Endothelial cell of umbilical vein (primary cell): ENCODE measurements at regions of chr3 and their contacts with region 1.

Region 1: DNA sequence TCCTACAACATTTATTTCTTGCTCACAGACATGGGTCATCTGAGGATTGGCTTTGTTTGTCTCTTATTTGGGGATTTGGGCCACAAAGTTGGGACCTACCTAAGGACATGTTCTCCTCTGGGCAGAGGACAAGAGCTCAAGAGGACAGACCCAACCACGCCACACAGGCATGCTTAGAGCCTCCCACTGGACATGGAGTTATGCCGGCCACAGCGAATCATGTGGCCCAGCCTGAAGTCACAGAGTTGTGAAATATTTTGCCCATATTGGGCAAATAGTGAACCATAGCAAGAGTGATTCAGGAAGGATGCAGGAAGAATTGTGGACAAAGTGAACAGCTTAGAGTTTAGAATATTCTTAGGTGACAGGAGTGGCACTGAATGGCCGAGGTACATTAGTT is 9.9 kb downstream of the TRAK1 start:
- DNase-seq: peak; percentile 28
- H3K4me3 ChIP-seq: no peak overlapping the region
- H3K27ac ChIP-seq: no peak overlapping the region
- H3K4me1 ChIP-seq: peaks cover 39% of the 10 kb centered on the region
- H3K27me3 ChIP-seq: no peaks in the 10 kb centered on the region
- CTCF ChIP-seq: no peak
- POLR2A ChIP-seq: no peak

Region 2: DNA sequence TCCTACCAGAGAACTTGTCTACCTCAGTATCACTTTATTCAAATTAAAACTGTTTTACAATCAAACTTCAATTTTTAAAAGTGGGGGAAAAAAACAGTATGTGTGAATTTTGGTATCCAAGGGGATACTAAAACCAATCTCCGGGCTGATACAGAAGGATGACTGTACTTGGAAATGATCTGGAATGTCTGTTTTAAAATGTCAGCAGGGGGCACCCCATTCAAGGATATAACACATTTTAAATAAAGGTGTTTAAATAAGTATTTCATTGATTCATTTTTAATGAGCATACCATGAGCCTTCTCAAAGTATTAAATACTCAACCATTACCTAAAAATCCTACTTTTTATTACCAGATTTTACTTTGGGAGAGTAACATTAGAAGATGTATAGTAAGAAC is 207.1 kb before region 1 on chr3:
- CTCF ChIA-PET with region 1: interaction called, 105 read pairs
- POLR2A ChIA-PET with region 1: no interaction called
- dilution Hi-C with region 1: no loop called
- intact Hi-C with region 1: loop called (anchors 1 kb)
- DNase-seq: peak; percentile 75
- H3K4me3 ChIP-seq: no peak overlapping the region
- H3K27ac ChIP-seq: no peak overlapping the region
- H3K4me1 ChIP-seq: no peaks in the 10 kb centered on the region
- H3K27me3 ChIP-seq: no peaks in the 10 kb centered on the region
- CTCF ChIP-seq: peak; percentile 14 to 22
- POLR2A ChIP-seq: no peak

Region 3: DNA sequence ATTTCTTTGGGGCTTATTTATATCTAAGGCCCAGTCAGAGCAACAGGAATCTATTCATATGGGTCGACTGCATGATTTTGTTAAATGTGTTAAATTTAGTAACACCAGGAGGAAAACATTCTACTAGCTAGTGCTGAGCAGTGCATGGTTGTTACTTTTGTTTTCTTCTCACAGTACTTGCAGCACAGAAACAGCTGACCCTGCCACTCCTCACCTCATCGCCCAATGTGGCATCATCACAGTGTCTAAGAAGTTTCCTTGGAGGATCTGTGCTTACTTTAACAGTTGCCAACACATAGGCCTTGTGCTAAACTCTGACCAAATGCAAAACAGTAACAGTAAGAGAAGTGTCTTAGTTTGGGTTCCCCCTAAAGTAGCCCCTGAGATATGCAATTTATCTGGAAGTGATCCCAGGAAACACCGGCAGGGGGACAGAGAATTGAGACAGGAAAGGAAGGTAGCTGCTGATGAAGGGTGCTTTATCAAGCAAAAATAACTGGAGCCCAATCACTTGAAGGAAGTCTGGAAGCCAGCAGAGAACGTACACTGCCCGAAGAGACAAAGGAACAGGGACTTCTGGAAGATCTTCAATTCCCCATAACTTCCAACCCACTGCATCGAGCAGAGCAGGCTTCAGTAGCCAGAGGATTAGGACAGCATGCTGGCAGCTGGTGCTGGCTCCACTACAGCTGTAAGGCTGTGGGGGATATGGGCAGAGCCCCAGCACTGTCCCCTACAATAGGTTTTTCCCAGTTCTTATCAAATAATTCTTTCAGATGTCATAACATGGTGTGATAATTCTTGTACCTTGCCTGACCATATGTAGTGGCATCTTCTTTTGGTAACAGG is 103.1 kb before region 1 on chr3:
- CTCF ChIA-PET with region 1: interaction called, 38 read pairs
- POLR2A ChIA-PET with region 1: no interaction called
- dilution Hi-C with region 1: no loop called
- intact Hi-C with region 1: loop called (anchors 1 kb)
- DNase-seq: no peak
- H3K4me3 ChIP-seq: no peak overlapping the region
- H3K27ac ChIP-seq: no peak overlapping the region
- H3K4me1 ChIP-seq: no peaks in the 10 kb centered on the region
- H3K27me3 ChIP-seq: no peaks in the 10 kb centered on the region
- CTCF ChIP-seq: peak; percentile 17 to 27
- POLR2A ChIP-seq: no peak

Region 4: DNA sequence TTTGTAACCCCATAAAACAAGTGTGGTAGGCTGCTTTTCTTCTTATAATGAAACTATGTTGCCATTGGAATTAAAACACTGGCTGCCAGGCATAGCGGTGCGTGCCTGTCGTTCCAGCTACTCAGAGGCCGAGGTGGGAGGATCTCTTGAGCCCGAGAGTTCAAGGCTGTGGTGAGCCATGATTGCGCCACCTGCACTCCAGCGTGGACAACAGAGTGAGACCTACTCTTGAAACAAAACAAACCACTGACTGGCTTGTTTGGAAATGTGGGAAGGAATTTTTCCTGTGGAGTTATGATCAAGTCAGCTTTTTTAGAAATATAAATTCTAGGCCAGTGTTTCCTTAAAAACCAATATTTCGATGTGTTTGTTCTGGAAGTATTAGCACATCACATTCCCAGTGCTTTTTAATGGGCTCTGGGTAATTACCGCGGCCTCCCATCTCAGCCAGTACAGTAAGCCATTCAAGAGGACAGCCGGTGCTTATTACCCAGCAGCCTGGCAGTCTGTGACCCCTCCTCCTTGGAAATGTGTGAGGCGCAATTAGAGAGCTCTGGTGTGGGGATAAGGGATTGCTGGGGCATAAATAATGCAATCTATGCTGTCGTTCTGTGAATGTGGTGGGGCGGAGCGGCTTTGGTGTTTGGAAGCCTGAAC is 68.2 kb before region 1 on chr3:
- CTCF ChIA-PET with region 1: interaction called, 23 read pairs
- POLR2A ChIA-PET with region 1: no interaction called
- dilution Hi-C with region 1: no loop called
- intact Hi-C with region 1: no loop called
- DNase-seq: peak; percentile 66
- H3K4me3 ChIP-seq: no peak overlapping the region
- H3K27ac ChIP-seq: no peak overlapping the region
- H3K4me1 ChIP-seq: peaks cover 35% of the 10 kb centered on the region
- H3K27me3 ChIP-seq: no peaks in the 10 kb centered on the region
- CTCF ChIP-seq: no peak
- POLR2A ChIP-seq: no peak

Region 5: DNA sequence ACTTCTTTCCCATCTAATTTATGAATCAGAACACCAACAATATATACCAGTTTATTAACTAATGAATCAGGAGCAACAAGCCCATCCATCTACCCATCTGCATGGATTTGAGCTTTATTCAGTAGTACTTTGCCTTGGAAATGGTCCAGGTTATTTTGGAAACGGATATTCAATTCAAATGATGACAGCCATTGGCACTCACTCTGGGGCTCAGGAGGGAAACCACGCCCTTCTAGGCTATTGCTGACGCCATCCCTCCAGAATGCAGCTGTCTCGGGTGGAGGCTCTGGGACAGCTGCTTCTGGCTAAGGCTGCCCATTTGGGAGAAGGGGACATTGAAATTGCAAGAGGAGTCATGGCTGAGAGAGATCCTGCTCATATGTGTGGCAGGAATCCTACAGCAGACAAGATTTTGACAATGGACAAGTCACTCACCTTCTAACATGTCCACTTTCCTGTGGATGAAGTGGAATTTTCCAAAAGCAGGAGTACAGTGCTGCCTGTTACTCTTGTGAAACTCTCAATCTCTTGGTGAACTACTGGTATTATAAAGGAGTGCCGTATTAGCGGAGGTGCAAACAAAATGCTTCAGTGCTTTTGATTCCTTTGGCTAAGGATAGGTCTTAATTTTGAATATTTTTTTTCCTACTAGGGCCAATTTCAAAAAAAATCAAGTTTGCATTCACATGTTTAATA is 39.2 kb before region 1 on chr3:
- CTCF ChIA-PET with region 1: interaction called, 5 read pairs
- POLR2A ChIA-PET with region 1: no interaction called
- dilution Hi-C with region 1: no loop called
- intact Hi-C with region 1: loop called (anchors 5 kb)
- DNase-seq: peak; percentile 90
- H3K4me3 ChIP-seq: no peak overlapping the region
- H3K27ac ChIP-seq: peak overlapping the region; percentile 80
- H3K4me1 ChIP-seq: peaks cover 36% of the 10 kb centered on the region
- H3K27me3 ChIP-seq: no peaks in the 10 kb centered on the region
- CTCF ChIP-seq: no peak
- POLR2A ChIP-seq: no peak

Region 6: GRCh38 chr3:42184651-42185443 is 83.8 kb after region 1 on chr3:
- CTCF ChIA-PET with region 1: interaction called, 11 read pairs
- POLR2A ChIA-PET with region 1: no interaction called
- dilution Hi-C with region 1: no loop called
- intact Hi-C with region 1: no loop called
- DNase-seq: peak; percentile 84
- H3K4me3 ChIP-seq: no peak overlapping the region
- H3K27ac ChIP-seq: peak overlapping the region; percentile 95
- H3K4me1 ChIP-seq: peaks cover 21% of the 10 kb centered on the region
- H3K27me3 ChIP-seq: no peaks in the 10 kb centered on the region
- CTCF ChIP-seq: no peak
- POLR2A ChIP-seq: no peak

Region 7: GRCh38 chr3:43540624-43541023 is 1439.6 kb after region 1 on chr3:
- CTCF ChIA-PET with region 1: no interaction called
- POLR2A ChIA-PET with region 1: no interaction called
- dilution Hi-C with region 1: no loop called
- intact Hi-C with region 1: no loop called
- DNase-seq: no peak
- H3K4me3 ChIP-seq: no peak overlapping the region
- H3K27ac ChIP-seq: no peak overlapping the region
- H3K4me1 ChIP-seq: peaks cover 3% of the 10 kb centered on the region
- H3K27me3 ChIP-seq: no peaks in the 10 kb centered on the region
- CTCF ChIP-seq: no peak
- POLR2A ChIP-seq: no peak